ENCODE measurements at regions of chr13 and their contacts with region 1.

Region 1: DNA sequence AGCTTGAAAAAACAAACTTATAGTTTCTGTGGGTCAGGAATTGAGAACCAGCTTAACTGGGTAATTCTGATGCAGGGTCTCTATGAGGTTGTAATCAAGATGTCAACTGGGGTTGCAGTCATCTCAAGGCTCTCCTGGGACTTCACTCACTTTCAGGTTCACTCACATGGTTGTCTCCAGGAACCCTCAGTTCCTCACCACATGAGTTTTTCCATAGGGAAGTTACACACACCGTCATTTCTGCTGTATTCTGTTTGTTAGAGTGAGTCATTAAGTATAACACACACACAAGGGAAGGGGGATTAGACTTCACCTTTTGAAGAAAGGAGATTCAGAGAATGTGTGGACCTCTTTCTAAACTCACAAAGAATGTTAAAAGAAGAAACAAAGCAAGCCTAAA is 34.9 kb upstream of the MLNR start:
- DNase-seq: no peak
- ATAC-seq: no peak
- H3K4me3 ChIP-seq: no peak overlapping the region
- H3K4me3 Mint-ChIP-seq: no peak overlapping the region
- H3K27ac ChIP-seq: no peak overlapping the region
- H3K27ac Mint-ChIP-seq: no peak overlapping the region
- H3K4me1 ChIP-seq: no peaks in the 10 kb centered on the region
- H3K4me1 Mint-ChIP-seq: peaks cover 2% of the 10 kb centered on the region
- H3K27me3 ChIP-seq: no peaks in the 10 kb centered on the region
- H3K27me3 Mint-ChIP-seq: no peaks in the 10 kb centered on the region
- CTCF ChIP-seq: no peak

Region 2: DNA sequence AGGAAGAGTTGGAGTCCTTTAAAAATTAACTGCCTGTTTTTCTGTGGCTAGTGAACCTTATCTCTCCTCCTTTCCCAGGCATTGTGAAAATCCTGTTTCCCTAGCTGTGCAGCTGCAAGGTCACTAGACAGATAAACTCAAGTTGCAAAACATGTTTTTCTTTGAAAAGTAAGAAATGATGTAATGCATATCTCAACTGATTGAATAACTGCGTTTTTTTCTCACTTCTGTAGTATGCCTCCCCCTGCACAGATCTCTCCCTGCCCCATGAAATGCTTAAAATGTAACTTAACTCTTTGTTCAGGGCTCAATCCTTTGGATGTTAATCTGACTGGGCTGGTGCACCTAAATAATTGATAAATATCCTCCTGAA is 559.2 kb before region 1 on chr13:
- CTCF ChIA-PET with region 1: no interaction called
- POLR2A ChIA-PET with region 1: no interaction called
- intact Hi-C with region 1: no loop called
- DNase-seq: no peak
- ATAC-seq: no peak
- H3K4me3 ChIP-seq: no peak overlapping the region
- H3K4me3 Mint-ChIP-seq: no peak overlapping the region
- H3K27ac ChIP-seq: no peak overlapping the region
- H3K27ac Mint-ChIP-seq: no peak overlapping the region
- H3K4me1 ChIP-seq: no peaks in the 10 kb centered on the region
- H3K4me1 Mint-ChIP-seq: no peaks in the 10 kb centered on the region
- H3K27me3 ChIP-seq: no peaks in the 10 kb centered on the region
- H3K27me3 Mint-ChIP-seq: no peaks in the 10 kb centered on the region
- CTCF ChIP-seq: no peak

Region 3: GRCh38 chr13:49171358-49171757 is 13.9 kb before region 1 on chr13:
- CTCF ChIA-PET with region 1: no interaction called
- POLR2A ChIA-PET with region 1: no interaction called
- intact Hi-C with region 1: no loop called
- DNase-seq: no peak
- ATAC-seq: no peak
- H3K4me3 ChIP-seq: no peak overlapping the region
- H3K4me3 Mint-ChIP-seq: no peak overlapping the region
- H3K27ac ChIP-seq: no peak overlapping the region
- H3K27ac Mint-ChIP-seq: no peak overlapping the region
- H3K4me1 ChIP-seq: no peaks in the 10 kb centered on the region
- H3K4me1 Mint-ChIP-seq: peaks cover 5% of the 10 kb centered on the region
- H3K27me3 ChIP-seq: no peaks in the 10 kb centered on the region
- H3K27me3 Mint-ChIP-seq: no peaks in the 10 kb centered on the region
- CTCF ChIP-seq: no peak

Region 4: GRCh38 chr13:50969691-50970090 is 1784.4 kb after region 1 on chr13:
- CTCF ChIA-PET with region 1: no interaction called
- POLR2A ChIA-PET with region 1: no interaction called
- intact Hi-C with region 1: loop called in 1 of 2 experiments (anchors 5 kb)
- DNase-seq: no peak
- ATAC-seq: no peak
- H3K4me3 ChIP-seq: no peak overlapping the region
- H3K4me3 Mint-ChIP-seq: no peak overlapping the region
- H3K27ac ChIP-seq: no peak overlapping the region
- H3K27ac Mint-ChIP-seq: no peak overlapping the region
- H3K4me1 ChIP-seq: no peaks in the 10 kb centered on the region
- H3K4me1 Mint-ChIP-seq: no peaks in the 10 kb centered on the region
- H3K27me3 ChIP-seq: no peaks in the 10 kb centered on the region
- H3K27me3 Mint-ChIP-seq: no peaks in the 10 kb centered on the region
- CTCF ChIP-seq: no peak